ENCODE measurements at regions of chr1 and their contacts with region 1.

Region 1: DNA sequence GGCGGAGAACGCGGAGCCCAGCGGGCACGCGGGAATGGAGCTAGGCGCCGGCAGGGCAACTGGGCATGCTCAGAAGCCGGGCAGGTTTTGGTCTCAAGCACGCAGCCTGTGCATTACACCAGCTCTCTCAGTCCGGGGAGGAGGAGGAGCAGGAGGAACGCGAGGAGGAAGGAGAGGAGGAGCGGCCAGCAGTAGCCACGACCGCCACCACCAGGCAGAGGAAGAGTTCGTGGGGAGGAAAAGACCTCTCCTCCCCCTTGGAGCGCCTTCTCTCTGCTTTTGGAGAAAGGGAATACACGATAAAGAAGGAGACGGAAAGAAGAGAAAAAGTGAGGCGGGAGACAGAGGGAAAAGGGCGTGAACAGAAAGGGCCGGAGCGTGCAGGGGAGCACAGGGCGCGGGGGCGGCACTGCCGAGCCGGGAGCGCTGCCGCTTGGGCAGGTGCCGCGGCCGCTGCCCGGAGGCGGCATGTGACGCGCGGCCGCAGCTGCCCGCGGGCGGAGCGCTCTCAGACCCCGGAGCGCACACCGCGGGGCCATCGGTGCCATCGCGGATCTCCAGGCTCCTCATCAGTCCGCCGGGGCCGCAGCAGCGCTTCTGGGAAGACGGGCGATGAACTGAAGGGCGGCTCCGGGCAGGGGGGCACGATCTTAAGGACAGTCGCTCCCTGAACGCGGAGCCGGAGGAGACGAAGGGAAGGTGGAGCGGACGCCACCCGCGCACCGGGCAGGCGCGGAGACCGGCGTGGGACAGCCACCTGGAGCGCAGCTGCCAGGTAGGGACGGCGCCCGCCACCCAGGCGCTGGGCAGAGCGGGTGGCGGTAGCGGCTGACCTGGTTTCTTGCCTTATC is at the start of gene CHRM3:
- DNase-seq: peak; percentile 87
- H3K4me3 ChIP-seq: peak within 1 kb of the TSS; percentile 66 to 89 (median 72)
- H3K27ac ChIP-seq: peak within 1 kb of the TSS; percentile 81 to 85 (median 83)
- H3K4me1 ChIP-seq: peaks cover 0 to 16% (median 3%) of the 10 kb centered on the region in 4 donors
- H3K27me3 ChIP-seq: peaks cover 33% of the 10 kb centered on the region
- CTCF ChIP-seq: peak; percentile 14 to 48 (median 17)
- EP300 ChIP-seq: no peak
- POLR2A ChIP-seq: peak; percentile 43
- total RNA-seq, gene CHRM3: 14.6 to 29.5 (median 18.9) TPM

Region 2: DNA sequence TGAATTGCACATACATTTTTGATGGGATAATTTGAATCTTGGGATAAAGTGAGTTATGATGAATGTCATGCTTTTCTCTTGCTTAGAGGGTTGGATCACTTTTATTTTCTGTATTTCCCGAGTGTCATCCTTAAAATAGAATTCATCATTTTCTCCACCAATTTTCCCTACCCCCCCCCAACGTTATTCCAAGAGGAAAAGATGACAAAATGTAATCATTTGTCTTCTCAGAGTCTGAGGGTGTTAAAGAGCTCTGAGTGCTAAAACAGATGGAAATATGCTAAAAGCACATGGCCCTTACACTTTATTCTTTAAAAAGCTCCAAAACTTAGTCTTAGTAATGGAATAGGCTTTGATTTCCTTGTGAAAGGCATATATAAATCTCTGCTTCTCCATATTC is 81.1 kb after region 1 on chr1:
- in situ Hi-C with region 1: no loop called
- intact Hi-C with region 1: no loop called
- DNase-seq: no peak
- H3K4me3 ChIP-seq: no peak overlapping the region
- H3K27ac ChIP-seq: no peak overlapping the region
- H3K4me1 ChIP-seq: no peaks in the 10 kb centered on the region
- H3K27me3 ChIP-seq: no peaks in the 10 kb centered on the region
- CTCF ChIP-seq: no peak
- EP300 ChIP-seq: no peak
- POLR2A ChIP-seq: no peak

Region 3: DNA sequence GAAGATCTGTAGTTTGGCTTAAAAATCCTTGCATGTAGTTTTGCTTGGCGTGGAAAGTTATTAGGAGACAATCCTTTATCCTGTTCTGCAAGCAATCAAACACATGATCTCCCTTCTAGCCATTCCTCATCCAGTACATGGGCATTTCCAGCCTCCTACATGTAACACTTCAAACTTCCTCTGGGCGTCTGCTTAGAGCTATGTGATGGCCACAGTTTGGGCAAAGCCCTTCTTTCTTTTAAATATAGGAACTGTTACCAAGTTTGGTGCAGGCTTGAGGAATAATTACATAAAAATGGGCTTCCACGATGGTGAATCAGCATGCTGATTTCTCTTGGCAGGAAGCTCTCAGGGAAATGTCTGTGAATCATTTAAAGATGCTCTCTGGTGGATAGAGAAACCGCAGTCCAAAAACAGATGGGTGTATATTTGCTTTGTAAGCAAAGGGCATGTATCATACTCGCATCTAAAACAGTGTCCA is 528.1 kb after region 1 on chr1:
- in situ Hi-C with region 1: loop called in 1 of 4 experiments (anchors 25 kb)
- intact Hi-C with region 1: no loop called
- DNase-seq: no peak
- H3K4me3 ChIP-seq: no peak overlapping the region
- H3K27ac ChIP-seq: peak overlapping the region in 2 of 4 donors; percentile 20 to 29
- H3K4me1 ChIP-seq: peaks cover 0 to 3% (median 0%) of the 10 kb centered on the region in 4 donors
- H3K27me3 ChIP-seq: no peaks in the 10 kb centered on the region
- CTCF ChIP-seq: no peak
- EP300 ChIP-seq: no peak
- POLR2A ChIP-seq: no peak